HAP-1 (cell line): ENCODE measurements at regions of chr20 and their contacts with region 1.

Region 1: GRCh38 chr20:54199721-54200176 is 8.1 kb upstream of the PFDN4 start:
- DNase-seq: peak; percentile 51 to 83
- H3K4me3 ChIP-seq: no peak overlapping the region
- H3K4me1 ChIP-seq: no peaks in the 10 kb centered on the region
- H3K27me3 ChIP-seq: peaks cover 2% of the 10 kb centered on the region; the same call in 1 of the 2 replicates

Region 2: GRCh38 chr20:53786445-53787267 is 413.1 kb before region 1 on chr20:
- in situ Hi-C with region 1: no loop called
- DNase-seq: peak; percentile 53 to 60
- H3K4me3 ChIP-seq: no peak overlapping the region
- H3K4me1 ChIP-seq: peaks cover 35% of the 10 kb centered on the region
- H3K27me3 ChIP-seq: no peaks in the 10 kb centered on the region

Region 3: DNA sequence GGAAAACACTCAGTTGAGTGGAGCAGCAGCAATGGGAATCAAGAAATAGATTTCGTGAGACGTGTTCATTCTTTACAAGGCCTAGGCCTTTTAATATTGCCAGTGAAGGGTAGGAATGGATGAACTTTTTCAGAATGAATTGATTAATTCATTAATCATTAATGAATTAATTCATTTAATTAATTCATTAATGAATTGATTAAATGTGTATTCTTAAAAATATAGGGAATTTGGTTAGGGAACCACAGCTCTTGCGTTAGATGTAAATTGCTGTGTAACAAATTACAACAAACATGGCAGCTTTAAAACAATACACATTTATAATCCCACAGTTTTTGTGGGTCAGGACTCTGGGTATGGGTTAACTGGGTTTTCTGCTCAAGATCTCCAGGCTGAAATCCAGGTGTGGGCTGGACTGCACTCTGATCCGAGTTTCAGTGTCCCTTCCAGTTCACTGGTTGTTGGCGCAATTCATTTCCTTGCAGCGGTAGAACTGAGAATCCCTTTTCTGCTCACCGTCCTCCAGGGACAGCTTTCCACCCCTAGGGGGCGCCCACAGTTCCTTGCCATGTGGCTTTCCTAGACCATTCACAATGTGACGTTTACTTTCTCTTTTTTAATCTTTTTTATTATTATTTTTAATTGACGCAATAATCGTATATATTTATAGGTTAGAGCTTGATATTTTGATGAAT is 96.5 kb before region 1 on chr20:
- in situ Hi-C with region 1: loop called (anchors 5 kb)
- DNase-seq: peak; percentile 47 to 91
- H3K4me3 ChIP-seq: no peak overlapping the region
- H3K4me1 ChIP-seq: no peaks in the 10 kb centered on the region
- H3K27me3 ChIP-seq: peaks cover 8% of the 10 kb centered on the region

Region 4: GRCh38 chr20:54576511-54576910 is 376.8 kb after region 1 on chr20:
- in situ Hi-C with region 1: no loop called
- DNase-seq: no peak
- H3K4me3 ChIP-seq: no peak overlapping the region
- H3K4me1 ChIP-seq: no peaks in the 10 kb centered on the region
- H3K27me3 ChIP-seq: no peaks in the 10 kb centered on the region